Activated B cell treated with CpG ODN at 0.5 μM for 24 hours (primary cell): ENCODE measurements at regions of chr10 and their contacts with region 1.

Region 1: DNA sequence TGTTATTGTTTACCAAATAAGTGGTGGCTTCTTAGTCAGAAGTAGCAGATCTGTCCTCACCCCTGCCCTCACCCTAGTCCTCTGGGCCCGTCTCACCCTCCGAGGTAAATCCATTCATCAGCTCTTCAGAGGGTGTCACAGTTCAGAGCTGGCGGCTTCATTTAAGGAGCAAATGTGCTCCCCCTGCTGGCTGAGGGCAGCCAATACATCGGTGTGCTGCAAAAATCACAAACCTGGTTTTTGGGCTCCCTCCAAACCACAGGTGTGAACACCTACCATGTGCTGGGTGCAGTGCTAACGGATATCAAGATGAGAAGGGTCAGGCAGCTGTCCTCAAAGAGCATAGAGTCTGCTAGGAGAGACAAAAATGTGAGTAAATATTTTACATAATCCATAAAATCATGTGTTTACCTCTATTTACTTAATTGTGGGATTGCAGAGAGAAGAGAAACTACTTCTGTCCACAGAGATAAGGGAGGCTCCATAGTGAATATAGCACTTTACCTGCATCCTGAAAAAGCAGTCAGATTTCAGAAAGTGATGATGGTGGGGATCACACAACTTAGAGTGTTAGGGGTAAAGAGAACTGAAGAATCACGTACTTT is 15.5 kb upstream of the CRTAC1 start:
- DNase-seq: no peak
- ATAC-seq: peak; percentile 75
- H3K4me3 Mint-ChIP-seq: no peak overlapping the region
- H3K27ac Mint-ChIP-seq: no peak overlapping the region
- H3K4me1 Mint-ChIP-seq: no peaks in the 10 kb centered on the region
- H3K27me3 Mint-ChIP-seq: peaks cover 27% of the 10 kb centered on the region
- CTCF ChIP-seq: peak; percentile 26

Region 2: DNA sequence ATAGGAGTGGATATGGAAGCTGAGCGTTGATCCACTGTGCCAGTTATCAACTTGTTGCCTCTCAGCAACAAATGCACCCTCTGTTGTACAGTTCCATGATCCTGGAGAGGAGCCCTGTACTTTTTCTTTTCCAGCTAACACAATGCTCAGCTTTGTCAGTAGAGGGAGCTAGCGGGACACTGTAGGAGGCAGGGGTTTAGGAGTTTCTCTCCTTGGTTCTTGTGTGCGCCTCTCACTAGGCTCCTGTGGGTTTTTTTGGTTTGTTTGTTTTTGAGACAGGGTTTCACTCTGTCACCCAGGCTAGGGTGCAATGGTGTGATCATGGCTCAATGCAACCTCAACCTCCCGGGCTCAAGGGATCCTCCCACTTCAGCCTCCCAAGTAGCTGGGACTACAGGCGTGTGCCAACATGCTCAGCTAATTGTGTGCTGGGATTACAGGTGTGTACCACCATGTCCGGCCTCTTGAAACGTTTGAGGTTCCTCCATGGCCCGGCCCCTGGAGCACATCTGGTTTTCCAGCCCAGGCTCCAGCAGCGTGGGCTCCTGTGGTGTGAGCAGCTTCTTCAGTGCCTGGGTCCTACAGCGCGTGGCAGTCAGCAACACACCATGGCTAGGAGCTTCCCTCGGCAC is 344.3 kb before region 1 on chr10:
- CTCF ChIA-PET with region 1: interaction called, 6 read pairs
- POLR2A ChIA-PET with region 1: no interaction called
- intact Hi-C with region 1: loop called (anchors 1 kb)
- DNase-seq: no peak
- ATAC-seq: peak; percentile 73
- H3K4me3 Mint-ChIP-seq: no peak overlapping the region
- H3K27ac Mint-ChIP-seq: no peak overlapping the region
- H3K4me1 Mint-ChIP-seq: no peaks in the 10 kb centered on the region
- H3K27me3 Mint-ChIP-seq: peaks cover 13% of the 10 kb centered on the region
- CTCF ChIP-seq: no peak

Region 3: GRCh38 chr10:97759158-97759887 is 286.6 kb before region 1 on chr10:
- CTCF ChIA-PET with region 1: no interaction called
- POLR2A ChIA-PET with region 1: no interaction called
- intact Hi-C with region 1: loop called (anchors 1 kb)
- DNase-seq: peak; percentile 33
- ATAC-seq: peak; percentile 69
- H3K4me3 Mint-ChIP-seq: no peak overlapping the region
- H3K27ac Mint-ChIP-seq: no peak overlapping the region
- H3K4me1 Mint-ChIP-seq: peaks cover 7% of the 10 kb centered on the region
- H3K27me3 Mint-ChIP-seq: no peaks in the 10 kb centered on the region
- CTCF ChIP-seq: no peak

Region 4: DNA sequence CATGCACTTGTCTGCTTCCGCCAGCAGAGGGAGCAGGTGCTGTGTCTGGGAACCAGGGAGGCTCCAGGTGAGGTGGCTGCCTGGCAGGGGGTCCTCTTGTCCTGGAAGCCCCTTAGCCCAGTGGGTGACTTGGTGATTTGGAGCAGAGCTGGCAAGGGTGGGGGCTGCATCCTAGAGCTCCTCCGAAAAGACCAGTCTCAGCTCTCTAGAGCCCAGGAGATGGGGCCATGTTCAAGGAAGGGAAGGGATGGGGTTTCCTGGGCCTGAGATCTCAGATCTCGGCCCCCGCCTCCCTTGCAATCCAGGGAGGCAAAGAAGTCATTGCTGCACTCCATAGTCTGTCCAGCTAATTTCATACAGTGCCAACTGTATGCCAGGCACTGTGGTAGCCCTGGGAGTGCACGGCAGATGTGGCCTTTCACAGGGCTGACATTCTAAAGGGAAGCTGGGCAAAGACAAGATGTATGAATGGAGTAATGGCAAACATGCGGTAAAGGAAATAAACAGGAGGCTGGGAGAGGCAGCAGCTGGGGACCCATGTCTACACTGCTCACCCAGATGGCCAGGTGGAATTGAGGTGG is 253.7 kb before region 1 on chr10:
- CTCF ChIA-PET with region 1: interaction called, 8 read pairs
- POLR2A ChIA-PET with region 1: no interaction called
- intact Hi-C with region 1: loop called (anchors 1 kb)
- DNase-seq: peak; percentile 47
- ATAC-seq: no peak
- H3K4me3 Mint-ChIP-seq: no peak overlapping the region
- H3K27ac Mint-ChIP-seq: no peak overlapping the region
- H3K4me1 Mint-ChIP-seq: peaks cover 5% of the 10 kb centered on the region
- H3K27me3 Mint-ChIP-seq: peaks cover 22% of the 10 kb centered on the region
- CTCF ChIP-seq: peak; percentile 43

Region 5: GRCh38 chr10:97914837-97915211 is 131.1 kb before region 1 on chr10:
- CTCF ChIA-PET with region 1: interaction called, 29 read pairs
- POLR2A ChIA-PET with region 1: no interaction called
- intact Hi-C with region 1: loop called (anchors 1 kb)
- DNase-seq: peak; percentile 44
- ATAC-seq: peak; percentile 73
- H3K4me3 Mint-ChIP-seq: no peak overlapping the region
- H3K27ac Mint-ChIP-seq: no peak overlapping the region
- H3K4me1 Mint-ChIP-seq: no peaks in the 10 kb centered on the region
- H3K27me3 Mint-ChIP-seq: peaks cover 19% of the 10 kb centered on the region
- CTCF ChIP-seq: no peak